ENCODE measurements at regions of chr22 and their contacts with region 1.

Region 1: GRCh38 chr22:36913427-36914389 is at the start of gene CSF2RB:
- DNase-seq: peak; percentile 36
- ATAC-seq: peak; percentile 85
- H3K4me3 Mint-ChIP-seq: peak within 1 kb of the TSS; percentile 94
- H3K27ac Mint-ChIP-seq: peak within 1 kb of the TSS; percentile 95
- H3K4me1 Mint-ChIP-seq: peaks cover 50% of the 10 kb centered on the region
- H3K27me3 Mint-ChIP-seq: peaks cover 1% of the 10 kb centered on the region
- CTCF ChIP-seq: no peak
- total RNA-seq, gene CSF2RB: 141 and 152 TPM in 2 replicates

Region 2: GRCh38 chr22:36862251-36863242 is 51.2 kb before region 1 on chr22:
- CTCF ChIA-PET with region 1: interaction called, 6 read pairs
- POLR2A ChIA-PET with region 1: interaction called, 42 read pairs
- intact Hi-C with region 1: loop called (anchors 1 kb)
- DNase-seq: peak; percentile 58
- ATAC-seq: peak; percentile 22
- H3K4me3 Mint-ChIP-seq: peak overlapping the region; percentile 77
- H3K27ac Mint-ChIP-seq: peak overlapping the region; percentile 95
- H3K4me1 Mint-ChIP-seq: peaks cover 92% of the 10 kb centered on the region
- H3K27me3 Mint-ChIP-seq: no peaks in the 10 kb centered on the region
- CTCF ChIP-seq: no peak

Measured in activated B cell treated with CpG ODN at 0.5 μM for 24 hours (primary cell).